ENCODE measurements at regions of chr7 and their contacts with region 1.

Region 1: DNA sequence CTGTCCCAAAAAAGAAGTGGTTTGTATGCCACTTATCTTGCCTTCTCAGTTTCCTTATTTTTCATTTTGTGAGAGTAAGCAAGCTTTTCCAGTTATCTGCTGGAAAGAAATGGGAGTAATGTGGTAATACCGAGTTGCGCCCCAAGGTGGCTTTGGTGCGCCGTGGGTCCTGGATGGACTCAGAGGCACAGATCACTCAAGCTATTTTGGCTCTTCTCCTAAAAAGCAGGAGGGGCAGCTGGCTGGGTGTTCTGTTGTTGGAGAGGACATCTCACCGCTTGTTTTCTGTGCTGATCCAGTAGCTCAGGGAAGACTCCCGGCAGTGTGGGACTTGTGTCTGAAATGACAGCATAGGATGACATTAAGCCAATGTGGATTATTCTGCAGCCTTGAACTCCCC is 16.4 kb downstream of the PRKRIP1 start:
- DNase-seq: peak; percentile 43
- ATAC-seq: peak; percentile 83
- H3K4me3 ChIP-seq: no peak overlapping the region
- H3K27ac ChIP-seq: no peak overlapping the region
- H3K4me1 ChIP-seq: no peaks in the 10 kb centered on the region
- H3K27me3 ChIP-seq: no peaks in the 10 kb centered on the region
- CTCF ChIP-seq: peak; percentile 55

Region 2: DNA sequence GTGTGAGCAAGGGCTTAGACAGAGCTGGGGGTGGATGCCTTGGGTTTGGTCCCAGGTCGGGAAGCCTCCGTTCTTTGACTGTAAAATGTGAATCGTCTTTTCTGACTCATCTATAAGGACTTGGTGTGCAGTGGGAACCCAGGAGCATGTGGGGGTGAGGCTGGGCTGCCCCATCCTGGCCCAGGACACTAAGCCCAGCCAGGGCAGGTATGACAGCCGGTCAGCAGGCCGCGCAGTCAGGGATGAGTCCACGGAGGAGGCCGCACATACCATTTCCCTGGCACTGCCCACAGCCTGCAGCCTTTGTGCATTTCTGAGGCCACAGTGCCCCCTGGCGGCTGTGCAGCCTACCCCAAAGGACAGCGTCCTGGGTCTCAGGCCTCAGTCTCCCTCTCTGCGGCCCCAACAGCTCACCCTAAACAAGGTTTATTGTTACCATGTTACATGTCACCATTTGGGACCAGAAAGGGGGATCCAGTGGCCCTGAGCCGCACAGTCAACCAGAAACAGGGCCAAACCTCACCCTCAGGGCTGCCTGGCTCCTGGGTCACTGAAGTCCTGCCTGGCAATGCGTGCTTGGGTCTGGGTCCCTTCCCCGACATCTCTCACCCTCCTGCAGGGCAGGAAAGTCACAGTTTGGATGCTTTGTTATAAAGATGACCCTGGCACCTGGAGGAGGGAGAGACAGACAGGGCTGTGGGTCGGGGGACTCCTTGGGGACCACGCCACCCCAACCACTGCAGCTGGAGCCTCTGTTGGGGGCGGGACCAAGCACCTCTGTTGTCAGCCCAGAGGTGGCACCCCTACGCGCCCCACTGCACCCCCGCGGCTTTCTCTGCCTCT is 140.3 kb before region 1 on chr7:
- CTCF ChIA-PET with region 1: no interaction called
- POLR2A ChIA-PET with region 1: no interaction called
- intact Hi-C with region 1: no loop called
- DNase-seq: peak; percentile 76
- ATAC-seq: peak; percentile 92
- H3K4me3 ChIP-seq: no peak overlapping the region
- H3K27ac ChIP-seq: no peak overlapping the region
- H3K4me1 ChIP-seq: no peaks in the 10 kb centered on the region
- H3K27me3 ChIP-seq: no peaks in the 10 kb centered on the region
- CTCF ChIP-seq: peak; percentile 94

Region 3: DNA sequence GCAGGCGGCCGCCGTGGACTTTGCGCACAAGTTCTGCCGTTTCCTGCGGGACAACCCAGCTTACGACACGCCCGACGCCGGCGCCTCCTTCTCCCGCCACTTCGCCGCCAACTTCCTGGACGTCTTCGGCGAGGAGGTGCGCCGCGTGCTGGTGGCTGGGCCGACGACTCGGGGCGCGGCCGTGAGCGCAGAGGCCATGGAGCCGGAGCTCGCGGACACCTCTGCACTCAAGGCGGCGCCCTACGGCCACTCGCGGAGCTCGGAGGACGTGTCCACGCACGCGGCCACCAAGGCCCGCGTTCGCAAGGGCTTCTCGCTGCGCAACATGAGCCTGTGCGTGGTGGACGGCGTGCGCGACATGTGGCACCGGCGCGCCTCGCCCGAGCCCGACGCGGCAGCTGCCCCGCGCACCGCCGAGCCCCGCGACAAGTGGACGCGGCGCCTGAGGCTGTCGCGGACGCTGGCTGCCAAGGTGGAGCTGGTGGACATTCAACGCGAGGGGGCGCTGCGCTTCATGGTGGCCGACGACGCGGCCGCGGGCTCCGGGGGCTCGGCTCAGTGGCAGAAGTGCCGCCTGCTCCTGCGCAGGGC is 111.8 kb before region 1 on chr7:
- CTCF ChIA-PET with region 1: no interaction called
- POLR2A ChIA-PET with region 1: no interaction called
- intact Hi-C with region 1: no loop called
- DNase-seq: no peak
- ATAC-seq: no peak
- H3K4me3 ChIP-seq: no peak overlapping the region
- H3K27ac ChIP-seq: no peak overlapping the region
- H3K4me1 ChIP-seq: no peaks in the 10 kb centered on the region
- H3K27me3 ChIP-seq: no peaks in the 10 kb centered on the region
- CTCF ChIP-seq: no peak

Region 4: DNA sequence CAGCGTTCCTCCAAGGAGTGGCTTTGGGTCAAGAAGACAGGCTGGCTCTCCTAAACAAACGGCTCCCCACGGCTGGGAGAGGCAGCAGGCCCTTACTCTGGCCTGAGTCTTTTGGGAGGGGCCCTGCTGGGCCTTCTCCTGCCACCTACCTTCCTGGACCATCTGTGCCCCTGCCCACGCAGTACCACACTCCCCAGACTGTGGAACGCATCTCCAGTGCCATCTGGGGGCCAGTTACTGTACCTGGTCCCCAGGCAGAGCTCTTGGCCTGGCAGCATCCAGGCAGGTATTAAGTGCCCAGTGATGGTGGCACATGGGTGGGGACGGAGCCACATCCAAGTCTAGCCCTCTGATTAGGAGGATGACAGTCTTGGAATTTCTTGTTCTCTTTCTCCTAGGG is 37.7 kb after region 1 on chr7:
- CTCF ChIA-PET with region 1: interaction called, 4 read pairs
- POLR2A ChIA-PET with region 1: no interaction called
- intact Hi-C with region 1: loop called (anchors 5 kb)
- DNase-seq: peak; percentile 51
- ATAC-seq: peak; percentile 75
- H3K4me3 ChIP-seq: no peak overlapping the region
- H3K27ac ChIP-seq: no peak overlapping the region
- H3K4me1 ChIP-seq: peaks cover 5% of the 10 kb centered on the region; the same call in 1 of the 2 replicates
- H3K27me3 ChIP-seq: no peaks in the 10 kb centered on the region
- CTCF ChIP-seq: peak; percentile 54

Measured in PC-3 (cell line).